GM23248 (cell line): ENCODE measurements at regions of chr20 and their contacts with region 1.

Region 1: DNA sequence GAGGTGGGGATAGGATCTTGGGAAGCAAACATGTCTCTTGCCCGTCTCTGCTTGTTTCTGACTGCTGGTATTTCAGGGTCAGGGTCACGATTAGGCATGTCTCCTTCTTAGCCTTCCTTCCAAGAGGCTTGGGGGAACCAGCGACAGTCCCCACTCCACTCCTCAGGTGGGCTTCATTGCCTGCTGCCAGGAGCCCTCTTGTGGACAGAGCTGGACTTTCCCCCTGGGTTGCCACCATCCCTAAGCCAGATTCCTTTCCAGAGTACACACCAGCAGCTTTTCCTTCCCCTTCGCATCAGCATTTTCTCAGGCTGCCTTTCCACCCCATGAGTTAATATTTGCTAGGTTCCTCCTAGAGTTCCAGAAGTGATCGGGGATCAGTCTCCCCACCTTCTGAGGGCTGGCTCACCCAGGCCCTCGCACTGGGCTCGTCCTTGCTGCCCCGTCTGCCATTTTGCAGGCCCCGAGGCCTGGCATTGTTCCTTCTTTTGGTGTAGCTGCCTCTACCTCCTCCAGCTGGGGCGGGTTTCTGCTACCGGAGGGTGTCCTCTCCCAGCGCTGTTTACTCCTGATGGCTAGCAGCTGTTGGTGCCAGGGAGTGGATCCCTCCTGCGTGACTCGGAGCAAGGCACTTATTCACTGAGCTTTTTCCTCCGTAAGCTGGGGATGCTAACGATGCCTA is 8.8 kb upstream of the C20orf144 start:
- DNase-seq: peak; percentile 78
- H3K4me3 ChIP-seq: peak overlapping the region; percentile 60
- H3K27ac ChIP-seq: no peak overlapping the region
- H3K4me1 ChIP-seq: peaks cover 7% of the 10 kb centered on the region
- H3K27me3 ChIP-seq: no peaks in the 10 kb centered on the region

Region 2: GRCh38 chr20:33465481-33466302 is 187.7 kb before region 1 on chr20:
- in situ Hi-C with region 1: loop called (anchors 10 kb)
- DNase-seq: no peak
- H3K4me3 ChIP-seq: no peak overlapping the region
- H3K27ac ChIP-seq: no peak overlapping the region
- H3K4me1 ChIP-seq: no peaks in the 10 kb centered on the region
- H3K27me3 ChIP-seq: no peaks in the 10 kb centered on the region

Region 3: DNA sequence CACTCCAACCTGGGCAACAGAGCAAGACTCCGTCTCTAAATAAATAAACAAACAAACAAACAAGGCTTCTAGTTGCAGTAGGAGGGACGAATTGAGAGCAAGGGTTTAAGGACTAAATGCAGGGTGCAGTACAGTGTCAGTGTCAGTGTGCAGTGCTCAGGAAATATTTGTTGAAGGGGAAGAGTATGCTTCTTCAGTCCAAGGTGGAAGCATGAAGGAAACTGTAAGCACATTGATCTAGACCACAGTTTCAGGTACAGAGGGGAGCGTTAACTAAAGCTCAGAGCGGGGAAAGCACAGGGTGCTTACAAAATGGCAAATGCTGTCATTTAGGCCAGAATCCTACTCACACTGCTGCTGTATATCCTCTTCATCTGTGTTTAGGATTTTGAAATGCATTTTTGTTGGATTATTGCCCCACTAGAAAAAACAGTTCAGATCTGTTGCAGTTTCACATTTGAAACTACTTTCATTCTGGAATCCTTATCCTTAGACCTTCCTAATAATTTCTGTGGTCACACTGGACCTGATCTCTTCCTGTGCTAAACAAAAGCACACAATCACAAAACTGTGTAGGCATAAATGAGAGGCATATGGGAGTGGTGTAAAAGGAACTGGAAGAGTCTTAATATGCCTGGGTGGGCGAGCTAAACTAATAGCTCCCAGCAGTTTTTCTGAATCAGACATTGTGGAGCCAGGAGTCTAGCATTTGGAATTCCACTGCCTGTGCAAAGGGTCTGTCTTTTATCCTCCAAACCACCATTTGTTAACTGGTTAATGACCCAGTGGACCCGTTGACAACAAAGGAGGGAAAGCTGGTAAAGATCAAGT is 122.1 kb before region 1 on chr20:
- in situ Hi-C with region 1: no loop called
- DNase-seq: peak; percentile 53
- H3K4me3 ChIP-seq: peak overlapping the region; percentile 15
- H3K27ac ChIP-seq: peak overlapping the region; percentile 34
- H3K4me1 ChIP-seq: peaks cover 22% of the 10 kb centered on the region
- H3K27me3 ChIP-seq: no peaks in the 10 kb centered on the region

Region 4: GRCh38 chr20:33791959-33792597 is 138.7 kb after region 1 on chr20:
- in situ Hi-C with region 1: no loop called
- DNase-seq: peak; percentile 50
- H3K4me3 ChIP-seq: no peak overlapping the region
- H3K27ac ChIP-seq: no peak overlapping the region
- H3K4me1 ChIP-seq: peaks cover 20% of the 10 kb centered on the region
- H3K27me3 ChIP-seq: no peaks in the 10 kb centered on the region